Ovary (tissue), 10 donors: ENCODE measurements at regions of chr7 and their contacts with region 1.

Region 1: GRCh38 chr7:155796381-155797261 is 15.6 kb downstream of the SHH start:
- DNase-seq: peak in 4 of 5 donors; percentile 42 to 71 (median 56)
- H3K4me3 ChIP-seq: no peak overlapping the region
- H3K27ac ChIP-seq: no peak overlapping the region
- H3K4me1 ChIP-seq: no peaks in the 10 kb centered on the region
- H3K27me3 ChIP-seq: no peaks in the 10 kb centered on the region
- CTCF ChIP-seq: peak; percentile 23 to 56 (median 40)
- EP300 ChIP-seq: no peak
- POLR2A ChIP-seq: no peak

Region 2: GRCh38 chr7:156764016-156764669 is 967.5 kb after region 1 on chr7:
- intact Hi-C with region 1: loop called in 1 of 4 experiments (anchors 10 kb)
- DNase-seq: peak; percentile 31 to 65 (median 53)
- H3K4me3 ChIP-seq: no peak overlapping the region
- H3K27ac ChIP-seq: no peak overlapping the region
- H3K4me1 ChIP-seq: peaks cover 2% of the 10 kb centered on the region
- H3K27me3 ChIP-seq: peaks cover 3% of the 10 kb centered on the region
- CTCF ChIP-seq: peak in 1 of 3 donors; percentile 21
- EP300 ChIP-seq: no peak
- POLR2A ChIP-seq: no peak

Region 3: GRCh38 chr7:156827587-156828203 is 1031.1 kb after region 1 on chr7:
- intact Hi-C with region 1: loop called in 1 of 4 experiments (anchors 10 kb)
- DNase-seq: no peak
- H3K4me3 ChIP-seq: no peak overlapping the region
- H3K27ac ChIP-seq: no peak overlapping the region
- H3K4me1 ChIP-seq: no peaks in the 10 kb centered on the region
- H3K27me3 ChIP-seq: no peaks in the 10 kb centered on the region
- CTCF ChIP-seq: no peak
- EP300 ChIP-seq: no peak
- POLR2A ChIP-seq: no peak